A549 (cell line): ENCODE measurements at regions of chr9 and their contacts with region 1.

Region 1: GRCh38 chr9:4762108-4762885 is 21.3 kb upstream of the AK3 start:
- DNase-seq: peak; percentile 48 to 83
- ATAC-seq: peak; percentile 73 to 83
- H3K4me3 ChIP-seq: no peak overlapping the region
- H3K27ac ChIP-seq: peak overlapping the region in 1 of 2 experiments; percentile 27; a peak in 3 of 6 replicates
- H3K4me1 ChIP-seq: 0 out of 3 replicates have a peak, but pooled peaks cover 6% of the 10 kb centered on the region
- CTCF ChIP-seq: peak; percentile 96
- EP300 ChIP-seq: no peak
- POLR2A ChIP-seq: no peak
- RAD21 ChIP-seq: peak; percentile 96 to 98

Region 2: GRCh38 chr9:4604678-4605095 is 157.6 kb before region 1 on chr9:
- CTCF ChIA-PET with region 1: interaction called, 11 read pairs
- POLR2A ChIA-PET with region 1: no interaction called
- DNase-seq: peak; percentile 68 to 75
- ATAC-seq: peak; percentile 96 to 98
- H3K4me3 ChIP-seq: no peak overlapping the region
- H3K27ac ChIP-seq: no peak overlapping the region
- H3K4me1 ChIP-seq: no peaks in the 10 kb centered on the region
- CTCF ChIP-seq: peak; percentile 77
- EP300 ChIP-seq: no peak
- POLR2A ChIP-seq: no peak
- RAD21 ChIP-seq: peak; percentile 71 to 75

Region 3: DNA sequence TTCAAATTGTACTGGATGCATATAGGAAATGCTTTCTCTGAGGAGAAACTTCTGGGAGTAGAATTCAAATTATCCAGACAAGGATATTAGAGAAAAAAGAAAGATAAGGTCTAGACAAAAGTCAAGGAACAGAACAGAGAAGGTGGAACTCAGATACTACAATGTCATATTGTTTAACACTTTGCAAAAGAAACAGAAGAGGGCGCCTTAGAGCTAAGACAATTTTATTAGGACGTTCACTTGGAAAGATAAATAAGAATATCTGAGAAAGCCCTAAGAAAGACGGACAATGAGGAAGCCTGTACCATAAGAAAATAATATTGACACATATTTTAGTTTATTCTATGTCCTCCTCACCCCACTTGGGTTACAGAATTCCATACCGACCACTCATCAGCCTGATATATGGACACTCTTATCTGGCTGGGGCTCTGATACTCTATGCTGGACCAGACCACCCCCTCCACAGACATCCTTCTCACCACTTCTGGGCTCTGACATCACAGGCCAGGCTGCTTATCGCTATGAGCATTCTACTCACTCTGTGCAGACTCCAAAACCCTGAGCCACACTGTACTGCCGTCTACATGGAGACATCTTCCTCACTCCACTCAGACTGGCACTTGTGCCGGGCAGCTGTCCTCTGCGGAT is 12.1 kb before region 1 on chr9:
- CTCF ChIA-PET with region 1: interaction called, 69 read pairs
- POLR2A ChIA-PET with region 1: no interaction called
- DNase-seq: peak in 1 of 2 experiments; percentile 46
- ATAC-seq: peak; percentile 68 to 83; a peak in 4 of 6 replicates
- H3K4me3 ChIP-seq: no peak overlapping the region
- H3K27ac ChIP-seq: no peak overlapping the region
- H3K4me1 ChIP-seq: no peaks in the 10 kb centered on the region
- CTCF ChIP-seq: peak; percentile 68
- EP300 ChIP-seq: no peak
- POLR2A ChIP-seq: no peak
- RAD21 ChIP-seq: peak; percentile 54 to 58

Region 4: GRCh38 chr9:4792572-4793458 is 30.5 kb after region 1 on chr9 and contains the start of gene RCL1:
- CTCF ChIA-PET with region 1: interaction called, 19 read pairs
- POLR2A ChIA-PET with region 1: no interaction called
- DNase-seq: peak; percentile 92 to 95
- ATAC-seq: peak; percentile 95 to 99
- H3K4me3 ChIP-seq: peak within 1 kb of the TSS; percentile 97
- H3K27ac ChIP-seq: peak within 1 kb of the TSS; percentile 89 to 93
- H3K4me1 ChIP-seq: peaks cover 5% of the 10 kb centered on the region; the same call in 1 of the 3 replicates
- CTCF ChIP-seq: no peak
- EP300 ChIP-seq: no peak
- POLR2A ChIP-seq: peak; percentile 69
- RAD21 ChIP-seq: no peak
- polyA plus RNA-seq, gene RCL1: 25.5 and 26.7 TPM in 2 replicates

Region 5: DNA sequence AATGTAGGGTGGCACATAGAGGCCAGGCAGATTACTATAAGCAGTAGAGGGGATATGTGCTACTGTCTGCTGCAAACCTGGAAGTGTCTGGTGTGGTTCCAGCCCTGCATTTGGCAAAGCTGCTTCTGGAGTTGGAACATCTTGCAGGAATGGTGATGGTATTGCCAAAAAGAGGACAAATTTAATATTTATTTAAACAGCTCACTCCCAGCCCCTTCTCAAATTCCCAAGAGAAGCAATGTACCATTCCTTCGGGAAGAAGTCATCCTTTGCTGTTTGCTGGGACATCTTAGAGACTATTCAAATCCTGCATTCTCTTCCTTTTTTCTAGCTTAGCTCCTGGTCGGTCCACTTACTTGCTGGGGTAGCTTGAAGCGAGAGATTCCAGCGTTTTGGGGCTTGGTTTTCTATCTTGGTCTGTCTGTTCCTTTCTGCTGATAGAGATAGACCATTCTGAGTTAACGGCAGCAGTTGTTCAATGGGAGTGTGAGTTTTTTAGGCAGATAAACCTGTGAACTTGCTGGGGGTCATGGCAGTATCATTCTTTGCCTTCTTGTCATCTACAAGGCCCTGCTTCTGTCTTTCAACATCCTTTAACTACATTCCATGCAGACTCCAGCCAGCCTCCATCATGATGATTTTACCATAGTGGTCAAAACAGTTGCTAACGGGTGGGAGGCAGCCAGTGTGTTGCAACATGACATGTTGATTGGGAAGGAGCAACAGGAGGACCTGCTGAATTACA is 100.4 kb after region 1 on chr9:
- CTCF ChIA-PET with region 1: interaction called, 11 read pairs
- POLR2A ChIA-PET with region 1: no interaction called
- DNase-seq: no peak
- ATAC-seq: no peak
- H3K4me3 ChIP-seq: no peak overlapping the region
- H3K27ac ChIP-seq: no peak overlapping the region
- H3K4me1 ChIP-seq: no peaks in the 10 kb centered on the region
- CTCF ChIP-seq: no peak
- EP300 ChIP-seq: no peak
- POLR2A ChIP-seq: no peak
- RAD21 ChIP-seq: no peak

Region 6: GRCh38 chr9:4984621-4985385 is 222.5 kb after region 1 on chr9 and contains the start of gene JAK2:
- CTCF ChIA-PET with region 1: interaction called, 135 read pairs
- POLR2A ChIA-PET with region 1: interaction called, 3 read pairs
- DNase-seq: peak; percentile 71 to 95
- ATAC-seq: peak; percentile 93 to 95
- H3K4me3 ChIP-seq: peak within 1 kb of the TSS; percentile 75
- H3K27ac ChIP-seq: peak within 1 kb of the TSS; percentile 94 to 97
- H3K4me1 ChIP-seq: peaks cover 21% of the 10 kb centered on the region
- CTCF ChIP-seq: peak; percentile 50
- EP300 ChIP-seq: no peak; a peak in 1 of 5 replicates
- POLR2A ChIP-seq: peak; percentile 73
- RAD21 ChIP-seq: peak; percentile 30 to 49; a peak in 4 of 5 replicates
- polyA plus RNA-seq, gene JAK2: 6.5 and 7.7 TPM in 2 replicates